ENCODE measurements at regions of chr10 and their contacts with region 1.

Region 1: GRCh38 chr10:107653832-107654287 is 489.4 kb upstream of the SORCS1 start:
- DNase-seq: no peak

Region 2: DNA sequence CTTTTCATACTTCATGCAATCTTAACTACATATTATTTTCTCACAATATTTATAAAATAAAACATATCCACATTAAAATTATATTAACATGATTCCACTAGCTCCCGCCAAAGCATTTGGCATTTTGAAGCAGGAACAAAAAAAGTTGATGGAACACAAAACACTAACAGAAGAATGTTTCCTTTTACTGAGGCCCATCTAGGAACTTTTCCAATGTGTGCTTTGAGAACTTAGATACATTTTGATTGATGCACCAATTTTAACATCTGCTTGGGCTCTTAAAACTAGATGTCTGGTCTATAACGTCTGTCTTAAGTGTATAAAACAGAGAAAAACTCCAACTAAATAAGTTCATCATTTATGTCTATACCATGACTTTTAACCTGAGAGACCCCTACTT is 1704.1 kb before region 1 on chr10:
- intact Hi-C with region 1: loop called in 1 of 2 experiments (anchors 5 kb)
- DNase-seq: no peak

Region 3: GRCh38 chr10:107059872-107060271 is 594.0 kb before region 1 on chr10:
- intact Hi-C with region 1: loop called in 1 of 2 experiments (anchors 5 kb)
- DNase-seq: no peak

Measured in posterior vena cava (tissue), 2 donors.